ENCODE measurements at regions of chr1 and their contacts with region 1.

Region 1: GRCh38 chr1:30379684-30380624 is 343.4 kb downstream of the MATN1 start:
- DNase-seq: peak in 1 of 2 experiments; percentile 72
- H3K4me3 ChIP-seq: no peak overlapping the region
- H3K27ac ChIP-seq: no peak overlapping the region
- H3K4me1 ChIP-seq: peaks cover 0 to 2% (median under 1%) of the 10 kb centered on the region in 4 experiments; a peak in 2 of 7 replicates
- H3K27me3 ChIP-seq: no peaks in the 10 kb centered on the region
- CTCF ChIP-seq: peak; percentile 37 to 93 (median 72)
- EP300 ChIP-seq: no peak
- POLR2A ChIP-seq: no peak
- RAD21 ChIP-seq: peak; percentile 82 to 86

Region 2: DNA sequence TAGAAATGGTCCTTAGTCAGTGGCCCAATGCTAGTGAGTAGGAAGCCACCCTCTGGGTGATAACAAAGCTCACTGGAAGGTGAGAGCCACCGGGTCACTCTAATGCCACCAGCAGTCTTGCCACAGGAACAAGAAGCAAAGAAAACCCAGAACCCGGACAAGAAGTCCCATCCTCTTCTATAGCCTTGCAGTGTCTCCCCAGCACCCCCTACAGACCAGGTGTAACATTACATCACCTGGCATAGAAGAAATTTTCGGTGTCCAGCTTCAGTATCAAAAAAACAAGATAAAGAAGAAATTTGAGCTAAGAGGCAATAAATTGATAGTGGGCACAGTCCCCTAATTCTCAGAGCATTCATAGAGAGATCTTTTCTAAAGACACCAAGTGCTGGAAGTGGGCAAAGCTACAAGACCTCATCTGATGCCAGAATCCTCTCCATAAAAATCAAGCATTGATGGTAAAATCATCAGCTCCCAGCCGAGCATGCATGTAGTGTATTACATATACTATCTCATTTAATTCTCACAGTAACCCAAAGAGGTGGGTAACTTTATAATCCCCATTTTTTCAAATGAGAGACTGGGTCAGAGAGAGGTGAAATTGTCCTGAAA is 147.6 kb before region 1 on chr1:
- CTCF ChIA-PET with region 1: interaction called, 14 read pairs
- POLR2A ChIA-PET with region 1: no interaction called
- DNase-seq: peak in 1 of 2 experiments; percentile 58
- H3K4me3 ChIP-seq: no peak overlapping the region
- H3K27ac ChIP-seq: no peak overlapping the region
- H3K4me1 ChIP-seq: no peaks in the 10 kb centered on the region
- H3K27me3 ChIP-seq: no peaks in the 10 kb centered on the region
- CTCF ChIP-seq: peak; percentile 51 to 83 (median 61)
- EP300 ChIP-seq: no peak
- POLR2A ChIP-seq: no peak
- RAD21 ChIP-seq: peak; percentile 74 to 77

Region 3: DNA sequence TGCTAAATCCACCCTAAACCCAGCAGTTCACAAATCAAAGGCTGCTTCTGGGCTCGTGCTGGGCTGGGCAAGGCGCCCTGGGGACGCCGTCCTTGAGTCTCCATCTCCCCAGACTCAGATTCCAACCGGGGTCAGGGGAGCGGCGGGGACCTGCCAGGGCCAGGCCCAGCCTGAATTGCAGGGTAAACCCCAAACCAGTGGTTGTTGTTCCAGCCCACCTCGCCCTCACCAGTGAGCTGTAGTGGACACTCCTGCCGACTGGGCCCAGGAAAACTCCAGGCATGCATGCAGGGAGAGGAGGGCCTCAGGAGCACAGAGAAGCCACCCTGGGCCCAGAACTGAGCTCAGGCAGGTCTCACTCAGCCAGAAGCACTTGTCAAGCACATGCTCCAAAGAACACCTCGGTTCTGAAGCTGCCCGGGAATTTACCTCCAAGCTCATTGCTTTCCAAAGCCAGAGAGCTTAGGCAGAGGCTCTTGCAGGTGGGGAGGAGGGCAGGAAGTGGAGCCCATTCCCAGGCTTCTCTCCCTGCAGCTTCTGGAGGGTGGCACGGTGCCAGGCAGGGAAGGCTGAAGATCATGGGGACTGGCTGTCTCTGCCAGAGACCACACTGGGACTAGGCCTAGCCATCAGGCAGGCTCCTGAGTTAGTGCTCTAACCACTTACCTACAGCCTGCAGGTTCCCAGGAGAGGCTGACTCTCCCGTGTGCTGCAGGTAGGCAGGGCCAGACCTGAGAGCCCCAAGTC is 93.5 kb before region 1 on chr1:
- CTCF ChIA-PET with region 1: interaction called, 11 read pairs
- POLR2A ChIA-PET with region 1: no interaction called
- DNase-seq: peak in 1 of 2 experiments; percentile 42
- H3K4me3 ChIP-seq: no peak overlapping the region
- H3K27ac ChIP-seq: no peak overlapping the region
- H3K4me1 ChIP-seq: no peaks in the 10 kb centered on the region
- H3K27me3 ChIP-seq: no peaks in the 10 kb centered on the region
- CTCF ChIP-seq: no peak
- EP300 ChIP-seq: no peak
- POLR2A ChIP-seq: no peak
- RAD21 ChIP-seq: no peak

Region 4: DNA sequence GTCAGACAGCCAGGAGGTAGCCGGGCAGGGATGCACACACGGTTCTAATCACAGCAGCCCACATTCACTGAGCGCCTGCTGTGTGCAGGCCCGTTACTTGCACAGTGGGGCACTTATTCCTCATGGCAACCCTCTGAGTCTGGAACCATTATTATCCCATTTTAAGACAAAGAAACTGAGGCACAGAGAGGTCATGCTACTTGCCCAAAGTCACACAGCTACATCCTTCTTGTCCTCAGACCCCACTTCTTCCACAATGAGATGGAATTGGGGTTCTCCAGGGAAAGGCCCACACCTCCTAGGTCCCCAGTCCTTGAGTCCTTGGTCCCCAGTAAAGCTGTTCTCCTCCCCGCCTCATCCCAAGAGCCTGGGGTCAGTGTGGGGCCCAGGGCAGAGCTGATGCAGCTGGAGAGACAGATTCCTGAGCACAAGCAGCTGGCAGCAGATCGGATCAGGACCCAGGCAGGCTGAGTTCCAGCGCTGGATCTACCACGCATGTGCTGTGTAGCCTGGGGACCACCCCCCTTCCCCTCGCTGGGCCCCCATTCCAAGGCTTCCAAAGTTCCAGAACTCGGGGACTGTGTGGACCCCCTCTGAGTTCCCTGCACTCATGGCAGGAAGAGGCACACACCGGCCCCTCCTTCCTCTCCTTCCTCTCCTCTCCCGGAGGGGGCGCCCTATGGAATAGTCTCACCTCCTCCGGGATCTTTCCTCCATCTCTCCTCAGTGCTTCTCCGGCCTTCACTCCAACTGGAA is 50.0 kb before region 1 on chr1:
- CTCF ChIA-PET with region 1: interaction called, 13 read pairs
- POLR2A ChIA-PET with region 1: no interaction called
- DNase-seq: peak in 1 of 2 experiments; percentile 57
- H3K4me3 ChIP-seq: no peak overlapping the region
- H3K27ac ChIP-seq: no peak overlapping the region
- H3K4me1 ChIP-seq: no peaks in the 10 kb centered on the region
- H3K27me3 ChIP-seq: no peaks in the 10 kb centered on the region
- CTCF ChIP-seq: peak; percentile 10 to 52 (median 46); a peak in 2 of 4 replicates
- EP300 ChIP-seq: no peak
- POLR2A ChIP-seq: no peak
- RAD21 ChIP-seq: peak in 1 of 2 experiments; percentile 21; a peak in 1 of 4 replicates

Region 5: DNA sequence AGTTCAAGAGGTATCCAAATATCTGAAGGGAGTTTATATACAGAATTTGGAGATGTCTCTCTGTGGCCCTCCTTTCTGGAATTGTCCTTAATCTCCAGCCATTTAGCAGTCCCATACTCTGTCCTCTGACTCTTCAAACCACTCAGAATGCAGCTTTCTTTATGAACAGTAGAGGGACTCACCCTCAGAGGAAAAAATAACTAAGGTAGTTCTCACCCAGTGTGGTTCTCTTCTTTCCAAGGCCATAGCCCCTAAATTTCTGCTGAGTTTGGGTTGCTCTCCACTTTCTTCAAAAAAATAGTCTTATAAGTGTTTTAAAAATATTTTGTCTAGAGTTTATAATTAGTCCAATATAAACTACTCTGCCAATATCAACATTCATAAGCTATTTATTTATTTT is 26.3 kb before region 1 on chr1:
- CTCF ChIA-PET with region 1: interaction called, 139 read pairs
- POLR2A ChIA-PET with region 1: interaction called, 3 read pairs
- DNase-seq: no peak
- H3K4me3 ChIP-seq: no peak overlapping the region
- H3K27ac ChIP-seq: no peak overlapping the region
- H3K4me1 ChIP-seq: peaks cover 0 to 5% (median under 1%) of the 10 kb centered on the region in 4 experiments; a peak in 3 of 7 replicates
- H3K27me3 ChIP-seq: no peaks in the 10 kb centered on the region; a peak in 1 of 7 replicates
- CTCF ChIP-seq: peak in 2 of 3 experiments; percentile 17 to 41; a peak in 2 of 4 replicates
- EP300 ChIP-seq: no peak
- POLR2A ChIP-seq: no peak
- RAD21 ChIP-seq: peak; percentile 40 to 49

Region 6: GRCh38 chr1:30406996-30407864 is 27.3 kb after region 1 on chr1:
- CTCF ChIA-PET with region 1: interaction called, 11 read pairs
- POLR2A ChIA-PET with region 1: no interaction called
- DNase-seq: peak in 1 of 2 experiments; percentile 42
- H3K4me3 ChIP-seq: no peak overlapping the region
- H3K27ac ChIP-seq: no peak overlapping the region
- H3K4me1 ChIP-seq: 0 out of 7 replicates have a peak, but pooled peaks cover 0 to 2% (median 0%) of the 10 kb centered on the region in 4 experiments
- H3K27me3 ChIP-seq: no peaks in the 10 kb centered on the region
- CTCF ChIP-seq: no peak
- EP300 ChIP-seq: no peak
- POLR2A ChIP-seq: no peak
- RAD21 ChIP-seq: no peak

Region 7: GRCh38 chr1:30437059-30437576 is 57.2 kb after region 1 on chr1:
- CTCF ChIA-PET with region 1: no interaction called
- POLR2A ChIA-PET with region 1: no interaction called
- DNase-seq: no peak
- H3K4me3 ChIP-seq: no peak overlapping the region
- H3K27ac ChIP-seq: no peak overlapping the region
- H3K4me1 ChIP-seq: no peaks in the 10 kb centered on the region
- H3K27me3 ChIP-seq: no peaks in the 10 kb centered on the region
- CTCF ChIP-seq: no peak
- EP300 ChIP-seq: no peak
- POLR2A ChIP-seq: no peak
- RAD21 ChIP-seq: no peak

Region 8: DNA sequence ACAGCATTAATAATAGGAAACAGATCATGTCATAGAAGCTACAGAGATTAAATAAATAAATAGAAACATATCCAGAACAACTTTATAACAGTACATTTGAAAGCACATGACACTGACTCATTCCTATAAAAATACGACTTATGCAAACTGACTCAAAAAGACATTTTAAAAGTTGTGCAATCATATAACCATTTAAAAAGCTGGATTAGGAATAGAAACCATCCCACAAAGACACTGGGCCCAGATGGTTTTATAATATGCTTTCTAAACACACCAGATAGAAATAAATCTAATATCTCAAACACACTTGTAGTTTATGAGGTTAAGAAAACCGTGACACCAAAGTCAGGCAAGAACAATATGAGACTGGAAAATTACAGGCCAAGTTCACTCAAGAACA is 295.8 kb after region 1 on chr1:
- CTCF ChIA-PET with region 1: interaction called, 13 read pairs
- POLR2A ChIA-PET with region 1: no interaction called
- DNase-seq: no peak
- H3K4me3 ChIP-seq: no peak overlapping the region
- H3K27ac ChIP-seq: no peak overlapping the region
- H3K4me1 ChIP-seq: no peaks in the 10 kb centered on the region
- H3K27me3 ChIP-seq: no peaks in the 10 kb centered on the region
- CTCF ChIP-seq: no peak
- EP300 ChIP-seq: no peak
- POLR2A ChIP-seq: no peak
- RAD21 ChIP-seq: no peak

Measured in H1 (cell line).